ENCODE measurements at regions of chr2 and their contacts with region 1.

Region 1: GRCh38 chr2:68766376-68766845 is 31.8 kb downstream of the ARHGAP25 start:
- DNase-seq: peak; percentile 30 to 83 (median 66)
- ATAC-seq: peak; percentile 71 to 78
- H3K4me3 Mint-ChIP-seq: peak overlapping the region; percentile 69 to 94 (median 89)
- H3K27ac Mint-ChIP-seq: peak overlapping the region; percentile 95 to 100 (median 99)
- H3K4me1 Mint-ChIP-seq: peaks cover 68 to 99% (median 96%) of the 10 kb centered on the region in 4 donors
- H3K27me3 Mint-ChIP-seq: no peaks in the 10 kb centered on the region

Region 2: GRCh38 chr2:68467077-68467960 is 299.1 kb before region 1 on chr2 and contains the starts of genes APLF and FBXO48:
- POLR2A ChIA-PET with region 1: interaction called, 11 read pairs
- DNase-seq: peak; percentile 90 to 99 (median 98)
- ATAC-seq: peak; percentile 90 to 92
- H3K4me3 Mint-ChIP-seq: peak within 1 kb of the TSS; percentile 87 to 98 (median 96)
- H3K27ac Mint-ChIP-seq: peak within 1 kb of the TSS; percentile 85 to 98 (median 94)
- H3K4me1 Mint-ChIP-seq: peaks cover 12 to 53% (median 41%) of the 10 kb centered on the region in 4 donors
- H3K27me3 Mint-ChIP-seq: no peaks in the 10 kb centered on the region
- polyA plus RNA-seq, gene APLF: 1.4 to 1.6 (median 1.6) TPM
- polyA plus RNA-seq, gene FBXO48: 0.19 to 0.69 (median 0.36) TPM

Region 3: GRCh38 chr2:68721482-68722101 is 44.8 kb before region 1 on chr2:
- POLR2A ChIA-PET with region 1: interaction called, 20 read pairs
- DNase-seq: peak in 6 of 10 donors; percentile 22 to 59 (median 37)
- ATAC-seq: peak; percentile 85
- H3K4me3 Mint-ChIP-seq: peak overlapping the region; percentile 49 to 87 (median 81)
- H3K27ac Mint-ChIP-seq: peak overlapping the region; percentile 83 to 93 (median 90)
- H3K4me1 Mint-ChIP-seq: peaks cover 33 to 88% (median 80%) of the 10 kb centered on the region in 4 donors
- H3K27me3 Mint-ChIP-seq: no peaks in the 10 kb centered on the region

Region 4: DNA sequence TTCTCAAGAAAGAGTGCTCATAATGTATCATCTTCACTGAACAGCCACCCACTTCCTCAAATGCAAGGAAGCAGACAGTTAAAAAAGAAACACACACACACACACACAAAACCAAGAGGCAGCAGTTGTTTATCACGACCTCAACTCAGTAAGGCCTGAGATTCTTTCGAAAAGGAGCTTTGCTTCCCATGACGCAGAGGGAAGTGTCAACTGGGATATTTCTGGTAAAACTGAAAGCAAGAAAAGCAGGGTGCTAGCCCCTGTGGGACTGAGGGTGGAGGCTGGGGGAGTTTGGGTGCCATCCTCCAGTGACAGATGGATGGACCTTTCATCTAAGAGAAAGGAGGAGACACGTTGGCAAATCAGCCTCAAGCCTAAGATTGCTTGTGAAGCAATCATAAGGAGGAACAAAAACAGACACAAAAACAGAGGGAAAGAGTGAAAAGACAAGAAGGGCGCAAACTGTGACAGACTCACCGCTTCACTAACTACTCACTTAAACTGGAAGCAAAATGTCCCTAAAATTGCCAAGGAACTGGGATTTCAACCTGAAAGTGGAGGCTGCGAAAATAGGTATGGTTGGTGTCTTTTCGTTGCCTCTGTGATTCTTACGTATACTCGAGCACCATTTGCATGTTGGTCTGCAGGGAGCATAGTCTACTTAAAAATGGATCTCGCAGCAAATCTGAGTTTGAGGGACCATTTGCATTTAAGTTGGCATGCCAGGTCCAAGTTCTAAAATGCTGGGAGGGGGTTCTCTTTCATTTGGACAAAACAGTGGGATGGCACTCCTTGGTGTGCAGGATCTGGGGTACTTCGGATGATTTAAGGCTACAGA is 31.5 kb before region 1 on chr2 and contains the start of gene ARHGAP25:
- POLR2A ChIA-PET with region 1: interaction called, 14 read pairs
- DNase-seq: peak in 9 of 10 donors; percentile 22 to 71 (median 42)
- ATAC-seq: peak; percentile 72 to 75
- H3K4me3 Mint-ChIP-seq: no peak within 1 kb of the TSS
- H3K27ac Mint-ChIP-seq: no peak within 1 kb of the TSS
- H3K4me1 Mint-ChIP-seq: peaks cover 12 to 55% (median 38%) of the 10 kb centered on the region in 4 donors
- H3K27me3 Mint-ChIP-seq: no peaks in the 10 kb centered on the region
- polyA plus RNA-seq, gene ARHGAP25: 76.5 to 104 (median 95.4) TPM

Region 5: DNA sequence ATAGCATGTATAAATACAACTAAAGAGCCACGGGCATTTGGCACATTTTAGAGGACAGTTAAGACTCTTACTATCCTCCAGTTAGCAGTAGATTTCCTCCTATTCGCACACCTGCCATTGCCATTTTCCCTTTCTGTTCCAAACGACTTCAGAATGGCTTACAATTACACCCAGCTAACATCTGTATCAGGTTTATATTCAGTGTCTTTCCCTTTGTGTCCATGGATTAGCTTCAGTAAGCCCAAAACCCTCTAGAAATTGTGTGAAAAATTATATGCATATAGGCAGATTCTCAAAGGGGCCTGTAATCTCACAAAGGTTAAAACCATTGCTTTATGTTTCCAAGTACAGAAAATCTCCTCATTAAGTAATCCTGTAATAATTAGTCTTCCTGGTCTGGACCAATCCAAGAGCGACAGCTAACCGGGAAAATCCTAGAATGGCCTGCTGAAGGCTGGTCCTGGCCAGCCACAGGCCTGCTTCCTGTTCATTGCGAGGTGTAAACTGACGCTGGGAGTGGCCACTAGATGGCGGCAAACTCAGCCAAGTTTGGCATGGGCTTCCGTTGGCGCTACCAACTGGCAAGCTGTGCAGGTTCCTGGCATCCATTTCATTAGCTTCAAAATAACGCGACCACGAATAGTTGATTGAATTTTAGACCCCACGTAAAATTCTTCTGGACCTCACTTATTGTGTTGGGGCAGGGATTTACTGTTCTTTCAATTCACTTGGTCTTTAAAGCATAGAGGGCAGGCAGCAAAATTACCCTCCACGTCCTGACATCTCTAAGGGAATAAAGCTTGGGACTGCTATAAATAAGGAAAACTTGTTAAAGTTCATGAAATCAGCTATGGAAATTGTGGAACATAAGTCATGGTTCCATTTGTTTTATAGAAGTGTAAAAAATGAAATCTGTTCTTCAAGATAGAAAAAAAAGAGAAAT is 14.7 kb before region 1 on chr2:
- POLR2A ChIA-PET with region 1: interaction called, 281 read pairs
- DNase-seq: peak; percentile 78 to 94 (median 87)
- ATAC-seq: peak; percentile 95 to 96
- H3K4me3 Mint-ChIP-seq: peak overlapping the region; percentile 23 to 75 (median 62)
- H3K27ac Mint-ChIP-seq: peak overlapping the region; percentile 86 to 97 (median 90)
- H3K4me1 Mint-ChIP-seq: peaks cover 53 to 87% (median 84%) of the 10 kb centered on the region in 4 donors
- H3K27me3 Mint-ChIP-seq: no peaks in the 10 kb centered on the region

Region 6: DNA sequence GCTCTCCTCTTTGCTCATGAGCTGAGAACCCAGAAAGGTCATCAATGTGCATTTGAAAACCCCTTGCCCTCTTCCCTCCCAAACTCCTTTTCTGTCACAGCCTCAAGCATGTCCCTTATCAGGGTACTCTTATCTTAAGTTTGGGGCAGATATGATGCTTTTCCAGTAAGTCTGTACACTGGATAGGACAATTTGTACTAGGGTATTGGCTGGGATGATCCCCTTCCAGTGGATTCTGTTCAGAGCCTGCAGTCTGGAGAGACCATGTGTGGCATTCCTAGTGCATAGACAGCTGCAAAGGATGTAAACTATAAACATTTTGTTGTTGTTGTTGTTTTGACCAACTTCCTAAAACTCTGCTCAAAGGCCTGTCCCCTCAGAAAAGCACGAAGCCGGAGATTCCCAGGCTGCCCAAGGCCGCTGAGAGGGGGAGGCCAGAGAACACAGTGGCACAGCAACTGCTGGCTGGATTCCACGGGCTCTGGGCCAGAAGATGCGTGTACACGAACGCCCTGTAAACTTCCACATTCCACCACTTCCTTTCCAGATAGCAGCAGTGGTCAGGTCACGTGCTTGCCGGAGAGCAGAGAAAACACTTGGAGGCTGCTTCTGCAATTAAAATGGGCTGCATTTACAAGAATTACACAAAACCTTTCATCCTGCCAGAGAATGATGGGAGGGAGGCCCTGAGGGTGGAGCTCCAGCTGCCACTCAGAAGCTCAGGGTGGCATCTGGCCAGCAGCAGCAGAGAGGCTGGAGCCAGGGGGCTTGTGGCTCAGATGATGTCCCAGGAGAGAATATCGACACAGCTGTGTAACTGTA is 62.7 kb after region 1 on chr2:
- POLR2A ChIA-PET with region 1: interaction called, 14 read pairs
- DNase-seq: peak; percentile 41 to 86 (median 62)
- ATAC-seq: peak; percentile 71 to 83
- H3K4me3 Mint-ChIP-seq: peak overlapping the region; percentile 46 to 93 (median 79)
- H3K27ac Mint-ChIP-seq: peak overlapping the region; percentile 87 to 98 (median 92)
- H3K4me1 Mint-ChIP-seq: peaks cover 33 to 78% (median 67%) of the 10 kb centered on the region in 4 donors
- H3K27me3 Mint-ChIP-seq: no peaks in the 10 kb centered on the region

Region 7: GRCh38 chr2:68889500-68890185 is 123.2 kb after region 1 on chr2:
- POLR2A ChIA-PET with region 1: no interaction called
- DNase-seq: no peak
- ATAC-seq: no peak
- H3K4me3 Mint-ChIP-seq: no peak overlapping the region
- H3K27ac Mint-ChIP-seq: no peak overlapping the region
- H3K4me1 Mint-ChIP-seq: no peaks in the 10 kb centered on the region
- H3K27me3 Mint-ChIP-seq: peaks cover 0 to 4% (median 0%) of the 10 kb centered on the region in 5 donors

Region 8: GRCh38 chr2:68908392-68908970 is 142.1 kb after region 1 on chr2:
- POLR2A ChIA-PET with region 1: interaction called, 21 read pairs
- DNase-seq: peak; percentile 41 to 88 (median 71)
- ATAC-seq: peak; percentile 97 to 98
- H3K4me3 Mint-ChIP-seq: peak overlapping the region; percentile 17 to 66 (median 51)
- H3K27ac Mint-ChIP-seq: peak overlapping the region; percentile 1 to 92 (median 71)
- H3K4me1 Mint-ChIP-seq: peaks cover 20 to 37% (median 29%) of the 10 kb centered on the region in 4 donors
- H3K27me3 Mint-ChIP-seq: no peaks in the 10 kb centered on the region